IMR-90 (cell line): ENCODE measurements at regions of chr15 and their contacts with region 1.

Region 1: DNA sequence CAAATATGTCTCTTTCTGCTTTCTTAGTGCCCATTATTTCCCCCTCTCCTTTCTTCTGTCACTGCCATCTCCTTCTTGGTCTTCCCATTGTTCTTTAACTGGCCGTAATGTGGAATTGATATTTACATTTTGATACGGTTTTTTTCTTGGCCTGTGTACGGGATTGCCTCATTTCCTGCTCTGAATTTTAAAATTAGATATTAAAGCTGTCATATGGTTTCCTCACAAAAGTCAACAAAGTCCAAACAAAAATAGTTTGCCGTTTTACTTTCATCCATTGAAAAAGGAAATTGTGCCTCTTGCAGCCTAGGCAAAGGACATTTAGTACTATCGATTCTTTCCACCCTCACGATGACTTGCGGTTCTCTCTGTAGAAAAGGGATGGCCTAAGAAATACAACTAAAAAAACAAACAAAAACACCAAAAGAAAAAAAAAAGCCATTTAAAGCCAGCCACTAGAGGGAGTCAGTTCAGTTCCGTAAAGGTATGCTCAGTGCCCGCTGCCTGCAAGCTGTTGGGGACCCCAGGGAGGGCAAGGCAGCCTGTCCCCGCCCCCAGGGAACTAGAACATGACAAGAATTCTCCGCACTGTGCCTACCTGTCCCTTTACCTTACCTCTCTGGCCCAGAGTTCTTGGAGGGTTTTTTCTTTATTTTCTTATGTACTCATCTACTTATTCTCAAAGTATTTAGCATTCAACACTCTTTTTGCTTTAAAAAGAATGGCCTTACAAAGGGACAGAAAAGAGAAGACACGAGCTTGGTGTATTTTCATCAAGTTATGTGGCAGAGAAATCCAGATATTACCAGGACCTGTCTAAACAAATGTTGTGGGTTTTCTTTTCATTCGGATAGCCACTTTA is 30.0 kb upstream of the NR2E3 start:
- DNase-seq: peak; percentile 66
- ATAC-seq: peak; percentile 25
- H3K4me3 ChIP-seq: peak overlapping the region; percentile 15; the same call in 1 of the 2 replicates
- H3K27ac ChIP-seq: no peak overlapping the region
- H3K4me1 ChIP-seq: peaks cover 17% of the 10 kb centered on the region
- H3K27me3 ChIP-seq: no peaks in the 10 kb centered on the region
- CTCF ChIP-seq: peak; percentile 62
- POLR2A ChIP-seq: no peak
- RAD21 ChIP-seq: peak; percentile 38; the same call in 1 of the 2 replicates

Region 2: GRCh38 chr15:71752604-71753289 is 27.6 kb before region 1 on chr15:
- CTCF ChIA-PET with region 1: interaction called, 13 read pairs
- POLR2A ChIA-PET with region 1: no interaction called
- dilution Hi-C with region 1: no loop called
- in situ Hi-C with region 1: no loop called
- intact Hi-C with region 1: no loop called
- DNase-seq: peak; percentile 94
- ATAC-seq: peak; percentile 68
- H3K4me3 ChIP-seq: no peak overlapping the region
- H3K27ac ChIP-seq: no peak overlapping the region
- H3K4me1 ChIP-seq: peaks cover 8% of the 10 kb centered on the region
- H3K27me3 ChIP-seq: no peaks in the 10 kb centered on the region
- CTCF ChIP-seq: peak; percentile 65
- POLR2A ChIP-seq: no peak
- RAD21 ChIP-seq: peak; percentile 62

Region 3: GRCh38 chr15:71841563-71841962 is 61.2 kb after region 1 on chr15:
- CTCF ChIA-PET with region 1: no interaction called
- POLR2A ChIA-PET with region 1: no interaction called
- dilution Hi-C with region 1: no loop called
- in situ Hi-C with region 1: no loop called
- intact Hi-C with region 1: no loop called
- DNase-seq: no peak
- ATAC-seq: no peak
- H3K4me3 ChIP-seq: no peak overlapping the region
- H3K27ac ChIP-seq: no peak overlapping the region
- H3K4me1 ChIP-seq: no peaks in the 10 kb centered on the region
- H3K27me3 ChIP-seq: no peaks in the 10 kb centered on the region
- CTCF ChIP-seq: no peak
- POLR2A ChIP-seq: no peak
- RAD21 ChIP-seq: no peak

Region 4: DNA sequence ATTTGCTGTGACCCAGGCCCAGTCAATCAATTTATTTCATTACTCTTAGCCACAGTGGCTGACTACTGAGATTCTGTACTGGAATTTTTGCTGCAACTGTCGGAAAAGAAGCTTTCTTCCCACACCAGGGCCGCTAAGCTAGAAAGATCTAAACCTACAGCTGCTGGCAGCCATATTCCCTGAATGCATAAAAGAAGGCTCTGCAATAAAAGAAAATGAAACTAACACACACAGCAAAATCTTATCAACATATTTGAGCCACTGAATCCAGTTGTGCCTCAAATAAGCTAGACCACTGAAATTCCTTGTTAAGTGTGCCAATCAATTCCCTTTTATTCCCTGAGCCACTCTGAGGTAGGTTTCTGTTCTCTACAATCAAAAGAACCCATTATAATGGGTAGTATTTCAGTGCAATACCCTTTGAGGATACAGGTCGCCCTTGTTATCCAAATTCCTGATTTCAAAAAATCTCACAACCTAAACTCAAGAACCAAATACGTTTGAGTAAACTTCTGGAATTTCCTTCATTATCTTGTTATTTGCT is 277.3 kb after region 1 on chr15:
- CTCF ChIA-PET with region 1: no interaction called
- POLR2A ChIA-PET with region 1: no interaction called
- dilution Hi-C with region 1: no loop called
- in situ Hi-C with region 1: no loop called
- intact Hi-C with region 1: no loop called
- DNase-seq: no peak
- ATAC-seq: peak; percentile 37
- H3K4me3 ChIP-seq: peak overlapping the region; percentile 35; the same call in 1 of the 2 replicates
- H3K27ac ChIP-seq: no peak overlapping the region
- H3K4me1 ChIP-seq: peaks cover 3% of the 10 kb centered on the region; the same call in 1 of the 2 replicates
- H3K27me3 ChIP-seq: no peaks in the 10 kb centered on the region
- CTCF ChIP-seq: no peak
- POLR2A ChIP-seq: no peak
- RAD21 ChIP-seq: no peak